A673 (cell line): ENCODE measurements at regions of chr3 and their contacts with region 1.

Region 1: DNA sequence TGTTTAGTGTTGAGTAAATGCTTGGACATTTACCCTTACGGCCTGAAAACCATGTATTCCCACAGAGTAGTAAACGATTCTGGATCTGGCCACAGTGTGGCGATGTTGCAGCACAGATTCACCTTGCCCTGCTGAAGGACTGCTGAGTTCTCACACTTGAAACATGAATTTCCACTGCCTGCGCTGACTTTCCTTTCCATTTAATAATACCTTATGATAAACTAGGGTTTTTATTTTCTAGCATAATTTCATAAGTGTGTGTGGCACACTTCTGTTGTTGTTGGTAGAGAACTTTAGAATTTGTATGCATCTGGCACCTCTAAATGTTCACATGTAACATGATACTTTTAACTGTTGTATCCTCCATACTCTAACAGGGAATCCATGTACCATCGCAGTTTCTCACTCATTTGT is 53.9 kb downstream of the C3orf38 start:
- DNase-seq: peak; percentile 87
- H3K4me3 ChIP-seq: no peak overlapping the region
- H3K27ac ChIP-seq: no peak overlapping the region
- H3K4me1 ChIP-seq: peaks cover 12% of the 10 kb centered on the region
- H3K27me3 ChIP-seq: no peaks in the 10 kb centered on the region
- CTCF ChIP-seq: peak; percentile 91

Region 2: DNA sequence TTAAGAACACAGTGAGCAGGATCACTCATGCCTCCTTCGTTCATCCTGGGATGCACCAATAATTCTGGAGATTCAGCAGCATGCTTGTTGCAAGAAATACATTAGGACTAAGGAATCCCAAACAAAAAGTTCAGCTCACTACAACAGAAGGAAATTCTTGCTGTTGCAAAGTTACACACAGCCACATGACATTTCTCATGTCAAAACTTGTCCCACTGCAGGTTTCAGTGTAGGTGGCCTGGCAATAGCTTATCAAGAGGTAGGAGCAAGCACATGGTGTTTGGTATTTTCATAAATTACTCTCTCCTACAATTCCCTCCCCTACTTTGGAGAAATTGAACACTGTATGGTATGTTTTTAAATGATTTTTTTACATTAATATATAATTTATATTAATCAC is 504.2 kb after region 1 on chr3:
- CTCF ChIA-PET with region 1: no interaction called
- POLR2A ChIA-PET with region 1: no interaction called
- intact Hi-C with region 1: loop called (anchors 5 kb)
- DNase-seq: no peak
- H3K4me3 ChIP-seq: no peak overlapping the region
- H3K27ac ChIP-seq: no peak overlapping the region
- H3K4me1 ChIP-seq: peaks cover 23% of the 10 kb centered on the region
- H3K27me3 ChIP-seq: no peaks in the 10 kb centered on the region
- CTCF ChIP-seq: no peak

Region 3: GRCh38 chr3:89107461-89108290 is 904.0 kb after region 1 on chr3 and contains the start of gene EPHA3:
- CTCF ChIA-PET with region 1: no interaction called
- POLR2A ChIA-PET with region 1: no interaction called
- intact Hi-C with region 1: loop called (anchors 5 kb)
- DNase-seq: peak; percentile 96
- H3K4me3 ChIP-seq: peak within 1 kb of the TSS; percentile 59
- H3K27ac ChIP-seq: peak within 1 kb of the TSS; percentile 19
- H3K4me1 ChIP-seq: peaks cover 40% of the 10 kb centered on the region
- H3K27me3 ChIP-seq: no peaks in the 10 kb centered on the region
- CTCF ChIP-seq: no peak
- total RNA-seq, gene EPHA3: 21.5 and 25.7 TPM in 2 replicates

Region 4: DNA sequence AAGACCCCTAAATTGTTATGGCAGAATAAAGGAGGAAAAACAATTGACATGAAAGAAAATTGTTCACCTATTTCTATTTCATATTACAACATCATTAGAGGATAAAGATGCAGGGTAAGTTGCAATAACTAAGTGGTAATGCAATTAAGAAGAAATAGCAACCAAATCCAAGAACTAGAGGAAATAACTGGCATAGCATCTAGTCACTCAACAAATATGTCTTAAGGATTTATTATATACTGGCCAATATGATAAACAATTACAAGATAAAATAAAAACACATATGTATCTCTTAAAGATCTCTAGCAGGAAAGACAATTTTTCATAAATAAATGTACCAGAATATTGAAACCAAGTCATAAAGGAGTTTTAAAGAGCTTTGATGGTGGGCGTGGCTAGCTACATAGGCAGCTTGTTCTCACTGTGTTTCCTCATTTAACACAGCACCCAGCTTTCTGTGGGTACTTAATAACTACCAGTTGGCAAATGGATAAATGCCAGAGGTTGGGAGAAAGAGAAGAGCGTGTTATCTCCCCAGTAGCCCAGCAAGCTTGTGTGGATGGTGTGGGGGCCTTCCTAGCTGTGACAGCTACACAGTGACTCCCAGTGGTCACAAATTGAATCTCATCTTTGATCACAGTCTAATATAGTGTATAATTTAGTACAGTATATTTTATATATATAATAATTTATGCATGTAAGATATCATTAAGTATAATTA is 1887.7 kb after region 1 on chr3:
- CTCF ChIA-PET with region 1: interaction called, 4 read pairs
- POLR2A ChIA-PET with region 1: no interaction called
- intact Hi-C with region 1: loop called (anchors 1 kb)
- DNase-seq: peak; percentile 89
- H3K4me3 ChIP-seq: no peak overlapping the region
- H3K27ac ChIP-seq: no peak overlapping the region
- H3K4me1 ChIP-seq: peaks cover 21% of the 10 kb centered on the region
- H3K27me3 ChIP-seq: no peaks in the 10 kb centered on the region
- CTCF ChIP-seq: peak; percentile 71

Region 5: GRCh38 chr3:90184861-90185260 is 1981.2 kb after region 1 on chr3:
- CTCF ChIA-PET with region 1: no interaction called
- POLR2A ChIA-PET with region 1: no interaction called
- intact Hi-C with region 1: loop called (anchors 5 kb)
- DNase-seq: peak; percentile 28
- H3K4me3 ChIP-seq: no peak overlapping the region
- H3K27ac ChIP-seq: no peak overlapping the region
- H3K4me1 ChIP-seq: peaks cover 19% of the 10 kb centered on the region
- H3K27me3 ChIP-seq: no peaks in the 10 kb centered on the region
- CTCF ChIP-seq: no peak